WTC11 (cell line): ENCODE measurements at regions of chr17 and their contacts with region 1.

Region 1: DNA sequence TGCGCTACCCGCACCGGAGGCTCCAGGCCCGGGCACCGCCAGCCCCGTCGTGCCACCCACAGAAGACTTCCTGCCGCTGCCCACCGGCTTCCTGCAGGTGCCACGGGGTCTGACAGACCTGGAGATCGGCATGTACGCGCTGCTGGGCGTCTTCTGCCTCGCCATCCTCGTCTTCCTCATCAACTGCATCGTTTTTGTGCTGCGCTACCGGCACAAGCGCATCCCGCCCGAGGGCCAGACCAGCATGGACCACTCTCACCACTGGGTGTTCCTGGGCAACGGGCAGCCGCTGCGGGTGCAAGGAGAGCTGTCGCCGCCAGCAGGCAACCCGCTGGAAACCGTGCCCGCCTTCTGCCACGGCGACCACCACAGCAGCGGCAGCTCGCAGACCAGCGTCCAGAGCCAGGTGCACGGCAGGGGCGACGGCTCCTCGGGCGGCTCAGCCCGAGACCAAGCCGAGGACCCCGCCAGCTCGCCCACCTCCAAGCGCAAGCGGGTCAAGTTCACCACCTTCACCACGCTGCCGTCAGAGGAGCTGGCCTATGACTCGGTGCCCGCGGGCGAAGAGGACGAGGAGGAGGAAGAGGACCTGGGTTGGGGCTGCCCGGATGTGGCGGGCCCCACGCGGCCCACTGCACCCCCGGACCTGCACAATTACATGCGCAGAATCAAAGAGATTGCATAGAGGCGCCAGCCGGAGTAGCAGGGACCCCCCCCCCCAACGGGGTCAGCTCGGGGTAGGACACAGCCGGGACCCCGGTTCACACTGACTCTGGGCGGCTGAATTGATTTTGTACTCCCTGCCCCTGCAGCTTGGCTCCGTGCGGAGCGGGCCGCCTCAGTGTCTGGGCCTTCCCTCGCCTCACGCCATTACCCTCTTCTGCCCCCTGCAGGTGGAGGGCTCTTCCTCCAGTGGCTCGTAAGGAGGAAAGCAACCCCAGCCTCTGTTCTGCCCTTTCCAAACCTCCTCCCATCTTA is 58.5 kb downstream of the TMEM132E start:
- DNase-seq: peak; percentile 89
- ATAC-seq: peak; percentile 95
- H3K4me3 Mint-ChIP-seq: peak overlapping the region; percentile 25; the same call in 1 of the 2 replicates
- H3K27ac Mint-ChIP-seq: no peak overlapping the region
- H3K4me1 Mint-ChIP-seq: peaks cover 8% of the 10 kb centered on the region
- H3K27me3 Mint-ChIP-seq: peaks cover 43% of the 10 kb centered on the region
- CTCF ChIP-seq: peak; percentile 69

Region 2: DNA sequence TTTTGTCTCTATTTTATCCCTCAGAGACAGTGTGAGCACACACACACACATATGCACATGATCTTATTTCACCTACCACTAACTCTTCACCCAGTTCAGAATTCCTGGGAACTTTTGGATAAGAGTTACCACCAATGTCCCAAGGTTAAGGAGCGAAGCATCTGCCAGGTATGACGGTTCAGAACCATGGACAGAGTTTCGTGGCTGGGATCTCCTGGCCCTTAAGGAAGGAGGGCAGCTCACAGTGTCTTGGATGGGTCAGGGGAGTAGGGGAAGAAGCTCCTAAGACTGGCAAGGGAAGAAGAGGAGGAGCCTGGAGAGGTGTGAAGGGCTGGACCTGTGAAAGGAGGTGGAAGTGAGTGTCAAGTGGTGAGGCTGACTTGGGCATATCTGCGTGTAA is 81.5 kb before region 1 on chr17:
- CTCF ChIA-PET with region 1: interaction called, 10 read pairs
- POLR2A ChIA-PET with region 1: no interaction called
- DNase-seq: peak; percentile 70
- ATAC-seq: peak; percentile 87
- H3K4me3 Mint-ChIP-seq: no peak overlapping the region
- H3K27ac Mint-ChIP-seq: no peak overlapping the region
- H3K4me1 Mint-ChIP-seq: peaks cover 8% of the 10 kb centered on the region
- H3K27me3 Mint-ChIP-seq: peaks cover 4% of the 10 kb centered on the region
- CTCF ChIP-seq: no peak

Region 3: GRCh38 chr17:34579017-34579946 is 58.6 kb before region 1 on chr17 and contains the start of gene TMEM132E:
- CTCF ChIA-PET with region 1: interaction called, 26 read pairs
- POLR2A ChIA-PET with region 1: no interaction called
- DNase-seq: peak; percentile 68
- ATAC-seq: peak; percentile 7
- H3K4me3 Mint-ChIP-seq: peak within 1 kb of the TSS; percentile 84
- H3K27ac Mint-ChIP-seq: no peak within 1 kb of the TSS
- H3K4me1 Mint-ChIP-seq: peaks cover 36% of the 10 kb centered on the region
- H3K27me3 Mint-ChIP-seq: peaks cover 99% of the 10 kb centered on the region
- CTCF ChIP-seq: no peak
- total RNA-seq, gene TMEM132E: 1.2 to 2.3 TPM (median 2.0 TPM) in 3 replicates

Region 4: DNA sequence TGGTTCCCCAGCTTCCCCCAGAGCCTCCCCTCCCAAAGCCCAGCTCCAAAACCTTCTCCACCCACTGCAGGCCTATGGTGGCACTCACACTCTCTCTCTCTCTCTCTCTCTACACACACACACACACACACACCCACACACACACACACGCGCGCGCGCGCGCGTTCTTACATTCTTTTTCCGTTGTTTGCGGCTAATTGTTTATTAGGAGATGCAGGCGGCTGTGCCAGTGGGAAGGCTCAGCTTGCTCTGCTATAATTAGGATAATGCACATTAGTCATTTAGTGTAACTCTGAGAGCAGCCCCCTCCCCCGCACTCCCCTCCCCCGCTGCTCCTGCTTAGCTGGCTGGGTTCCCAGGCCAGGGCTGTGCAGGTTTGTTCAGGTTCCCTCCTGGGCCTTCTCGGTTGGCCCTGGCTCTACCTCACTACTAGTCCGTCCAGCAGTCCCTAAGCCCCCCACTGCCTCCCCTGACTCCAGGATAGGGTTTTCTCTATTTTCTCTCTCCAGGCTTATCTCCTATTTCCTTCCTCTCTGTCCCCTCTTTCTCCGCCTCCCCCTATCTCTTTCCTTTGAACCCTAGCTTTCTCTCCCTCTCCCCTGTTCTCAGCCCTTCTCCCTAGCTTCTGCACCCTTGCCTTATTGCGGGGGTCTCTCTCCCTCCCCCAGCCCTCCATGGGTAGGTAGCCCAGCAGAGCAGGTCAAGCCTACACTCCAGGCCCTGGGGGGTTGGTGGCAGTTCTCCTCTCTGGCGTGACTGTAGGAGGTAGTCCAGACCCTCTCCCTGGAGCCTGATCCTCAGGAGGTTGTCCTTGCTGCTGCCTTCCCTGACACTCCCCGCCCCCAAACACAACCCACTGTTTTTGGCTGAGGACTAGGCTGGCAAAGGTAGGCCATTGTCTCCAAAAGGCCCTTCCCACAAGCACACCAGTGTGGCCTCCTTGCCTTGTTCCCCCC is 24.5 kb before region 1 on chr17:
- CTCF ChIA-PET with region 1: interaction called, 27 read pairs
- POLR2A ChIA-PET with region 1: no interaction called
- DNase-seq: peak; percentile 45
- ATAC-seq: peak; percentile 40
- H3K4me3 Mint-ChIP-seq: no peak overlapping the region
- H3K27ac Mint-ChIP-seq: no peak overlapping the region
- H3K4me1 Mint-ChIP-seq: peaks cover 74% of the 10 kb centered on the region
- H3K27me3 Mint-ChIP-seq: peaks cover 12% of the 10 kb centered on the region; the same call in 1 of the 2 replicates
- CTCF ChIP-seq: no peak

Region 5: DNA sequence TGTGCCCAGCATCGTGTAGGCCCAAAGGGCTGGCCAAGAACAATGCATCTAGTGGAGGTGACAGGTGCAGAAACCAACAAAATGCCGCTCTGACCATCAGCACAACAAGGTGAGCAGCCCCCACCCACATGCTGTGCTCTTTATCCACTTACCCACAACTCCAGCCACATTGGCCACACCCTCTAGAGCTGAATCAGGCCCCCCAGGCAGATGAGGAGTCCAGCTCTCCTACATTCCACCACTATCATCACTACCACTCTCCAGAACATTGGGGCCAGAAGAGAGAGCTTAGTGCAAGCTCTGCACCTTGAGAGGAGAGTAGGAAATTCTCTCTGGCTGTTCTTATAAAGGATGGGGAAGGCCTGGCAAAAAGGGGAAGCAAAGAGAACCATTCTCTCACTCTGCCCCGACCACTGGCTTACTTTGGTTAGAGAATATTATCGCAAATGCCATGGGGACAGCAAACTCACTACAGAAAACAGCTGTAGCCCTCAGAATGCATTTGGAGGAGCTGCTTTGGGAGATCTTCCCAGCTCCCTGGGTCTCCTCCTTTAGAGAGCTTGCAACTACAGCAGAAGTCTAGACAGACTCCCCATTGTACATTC is 16.5 kb after region 1 on chr17:
- CTCF ChIA-PET with region 1: interaction called, 10 read pairs
- POLR2A ChIA-PET with region 1: no interaction called
- DNase-seq: no peak
- ATAC-seq: no peak
- H3K4me3 Mint-ChIP-seq: no peak overlapping the region
- H3K27ac Mint-ChIP-seq: no peak overlapping the region
- H3K4me1 Mint-ChIP-seq: no peaks in the 10 kb centered on the region; the same call in 1 of the 2 replicates
- H3K27me3 Mint-ChIP-seq: peaks cover 7% of the 10 kb centered on the region
- CTCF ChIP-seq: no peak